Tibial artery (tissue), 4 donors: ENCODE measurements at regions of chr6 and their contacts with region 1.

Region 1: GRCh38 chr6:106339334-106340029 is 13.9 kb upstream of the ATG5 start:
- DNase-seq: peak in 1 of 2 donors; percentile 28
- H3K4me3 ChIP-seq: no peak overlapping the region
- H3K27ac ChIP-seq: no peak overlapping the region
- H3K4me1 ChIP-seq: no peaks in the 10 kb centered on the region
- H3K27me3 ChIP-seq: peaks cover 0 to 5% of the 10 kb centered on the region in 2 donors
- CTCF ChIP-seq: peak; percentile 44 to 49

Region 2: GRCh38 chr6:106560996-106561685 is 221.7 kb after region 1 on chr6:
- intact Hi-C with region 1: loop called (anchors 10 kb)
- DNase-seq: no peak
- H3K4me3 ChIP-seq: no peak overlapping the region
- H3K27ac ChIP-seq: no peak overlapping the region
- H3K4me1 ChIP-seq: no peaks in the 10 kb centered on the region
- H3K27me3 ChIP-seq: no peaks in the 10 kb centered on the region
- CTCF ChIP-seq: no peak

Region 3: GRCh38 chr6:107459283-107460082 is 1120.0 kb after region 1 on chr6 and contains the start of gene PDSS2:
- intact Hi-C with region 1: no loop called
- DNase-seq: peak; percentile 99 to 100
- H3K4me3 ChIP-seq: peak within 1 kb of the TSS; percentile 79 to 84
- H3K27ac ChIP-seq: peak within 1 kb of the TSS; percentile 75 to 92
- H3K4me1 ChIP-seq: peaks cover 0 to 5% (median 0%) of the 10 kb centered on the region in 4 donors
- H3K27me3 ChIP-seq: no peaks in the 10 kb centered on the region
- CTCF ChIP-seq: peak in 1 of 2 experiments; percentile 37